Endothelial cell of umbilical vein (primary cell): ENCODE measurements at regions of chr19 and their contacts with region 1.

Region 1: GRCh38 chr19:35135389-35135909 is 590 bp upstream of the LGI4 start:
- DNase-seq: peak; percentile 67
- H3K4me3 ChIP-seq: no peak overlapping the region
- H3K27ac ChIP-seq: no peak overlapping the region
- H3K4me1 ChIP-seq: no peaks in the 10 kb centered on the region
- H3K27me3 ChIP-seq: no peaks in the 10 kb centered on the region
- CTCF ChIP-seq: peak; percentile 82 to 92
- POLR2A ChIP-seq: no peak

Region 2: GRCh38 chr19:35114353-35115176 is 20.9 kb before region 1 on chr19:
- CTCF ChIA-PET with region 1: interaction called, 20 read pairs
- POLR2A ChIA-PET with region 1: no interaction called
- dilution Hi-C with region 1: no loop called
- intact Hi-C with region 1: loop called (anchors 1 kb)
- DNase-seq: peak; percentile 60
- H3K4me3 ChIP-seq: no peak overlapping the region
- H3K27ac ChIP-seq: no peak overlapping the region
- H3K4me1 ChIP-seq: no peaks in the 10 kb centered on the region
- H3K27me3 ChIP-seq: no peaks in the 10 kb centered on the region
- CTCF ChIP-seq: peak; percentile 96 to 97
- POLR2A ChIP-seq: no peak

Region 3: DNA sequence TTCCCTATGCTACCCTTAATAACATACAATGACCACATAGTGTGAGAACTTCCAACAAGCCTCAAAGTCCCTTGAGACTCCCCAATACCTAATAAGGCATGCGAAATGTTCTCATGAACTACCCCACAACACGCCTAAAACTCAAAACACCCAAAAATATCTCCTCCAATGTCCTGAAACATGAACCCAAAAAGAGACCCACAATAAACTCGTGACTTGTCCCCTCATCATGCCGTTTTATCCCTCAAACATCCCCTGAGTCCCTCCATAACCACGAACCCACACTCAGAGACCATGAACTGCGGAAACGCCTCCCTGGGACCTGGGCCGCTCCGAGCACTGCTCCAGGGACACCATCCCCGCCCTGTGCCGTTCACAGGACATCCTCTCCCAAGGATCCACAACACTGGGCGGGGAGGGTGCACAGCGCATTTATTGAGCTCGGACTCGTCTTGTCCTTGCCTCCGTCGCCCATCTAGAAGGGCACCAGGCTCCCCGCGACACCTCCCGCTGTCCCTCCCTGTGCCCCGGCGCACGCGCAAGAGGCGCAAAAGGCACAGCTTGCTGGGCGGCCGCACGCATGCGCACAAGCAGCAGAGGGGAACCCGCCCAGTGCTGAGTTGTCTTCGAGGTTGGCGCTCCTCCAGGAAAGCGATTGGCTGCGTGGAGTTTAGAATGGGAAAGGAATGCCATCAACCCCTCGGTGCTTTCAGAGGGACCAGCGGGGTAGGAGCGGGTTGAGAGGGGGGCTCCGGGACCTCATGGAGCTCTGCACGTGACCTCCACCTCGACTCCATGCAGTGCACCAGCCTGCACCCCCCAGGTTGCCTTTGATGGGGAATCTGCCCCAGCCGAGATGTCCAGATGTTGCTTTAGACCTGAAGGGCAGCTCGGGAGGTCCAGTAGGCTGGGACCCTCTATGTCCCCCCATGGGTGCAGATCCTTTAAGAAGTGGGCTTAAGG is 11.1 kb before region 1 on chr19:
- CTCF ChIA-PET with region 1: interaction called, 23 read pairs
- POLR2A ChIA-PET with region 1: no interaction called
- dilution Hi-C with region 1: no loop called
- intact Hi-C with region 1: no loop called
- DNase-seq: peak; percentile 89
- H3K4me3 ChIP-seq: peak overlapping the region in 2 of 3 experiments; percentile 39 to 49
- H3K27ac ChIP-seq: no peak overlapping the region
- H3K4me1 ChIP-seq: peaks cover 3% of the 10 kb centered on the region
- H3K27me3 ChIP-seq: no peaks in the 10 kb centered on the region
- CTCF ChIP-seq: no peak
- POLR2A ChIP-seq: peak; percentile 63

Region 4: DNA sequence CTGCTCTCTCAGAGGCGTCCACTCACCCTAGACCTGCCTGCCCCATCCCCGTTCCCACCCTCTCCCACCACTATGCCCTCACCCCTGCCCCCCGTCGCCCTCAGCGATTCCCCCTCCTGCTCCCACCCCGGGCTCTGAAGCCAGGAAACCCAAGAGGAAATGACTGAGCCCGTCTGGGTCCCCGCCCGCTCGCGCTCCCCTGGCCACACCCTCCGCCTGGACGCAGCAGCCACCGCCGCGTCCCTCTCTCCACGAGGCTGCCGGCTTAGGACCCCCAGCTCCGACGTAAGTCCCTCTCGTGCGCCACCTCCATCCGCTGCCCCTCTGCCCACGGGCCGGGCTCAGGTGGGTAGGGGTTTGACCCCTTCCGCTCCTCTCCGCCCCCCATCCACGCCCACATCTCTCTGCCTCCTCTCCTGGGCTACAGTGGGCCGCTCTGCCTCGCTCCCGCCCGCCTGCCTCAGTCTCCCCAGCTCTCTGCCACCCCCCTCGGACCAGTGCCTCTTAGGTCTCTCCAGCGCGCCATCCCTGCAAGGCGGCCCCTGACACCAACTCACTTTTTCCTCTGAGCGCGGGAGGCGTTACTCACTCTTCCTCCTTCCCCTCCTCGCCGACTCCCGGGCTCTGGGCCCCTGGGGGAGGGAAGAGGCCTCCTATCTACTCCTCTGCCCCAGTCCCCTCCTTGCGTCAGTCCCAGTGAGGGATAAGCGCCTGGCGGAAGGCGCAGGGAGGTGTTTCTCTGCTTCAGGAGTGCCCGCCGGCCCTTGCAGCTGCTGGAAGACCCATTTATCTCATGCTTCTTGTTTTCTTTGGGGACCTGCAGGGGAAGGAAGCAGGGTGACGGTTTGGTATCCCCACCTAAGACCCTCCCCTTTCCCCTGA is 19.3 kb after region 1 on chr19 and contains the start of gene FXYD5:
- CTCF ChIA-PET with region 1: interaction called, 14 read pairs
- POLR2A ChIA-PET with region 1: interaction called, 4 read pairs
- dilution Hi-C with region 1: no loop called
- intact Hi-C with region 1: no loop called
- DNase-seq: peak; percentile 79
- H3K4me3 ChIP-seq: peak within 1 kb of the TSS; percentile 78 to 98 (median 82)
- H3K27ac ChIP-seq: peak within 1 kb of the TSS; percentile 95
- H3K4me1 ChIP-seq: peaks cover 20% of the 10 kb centered on the region
- H3K27me3 ChIP-seq: no peaks in the 10 kb centered on the region
- CTCF ChIP-seq: no peak
- POLR2A ChIP-seq: peak; percentile 77
- total RNA-seq, gene FXYD5: 219 and 223 TPM in 2 replicates

Region 5: DNA sequence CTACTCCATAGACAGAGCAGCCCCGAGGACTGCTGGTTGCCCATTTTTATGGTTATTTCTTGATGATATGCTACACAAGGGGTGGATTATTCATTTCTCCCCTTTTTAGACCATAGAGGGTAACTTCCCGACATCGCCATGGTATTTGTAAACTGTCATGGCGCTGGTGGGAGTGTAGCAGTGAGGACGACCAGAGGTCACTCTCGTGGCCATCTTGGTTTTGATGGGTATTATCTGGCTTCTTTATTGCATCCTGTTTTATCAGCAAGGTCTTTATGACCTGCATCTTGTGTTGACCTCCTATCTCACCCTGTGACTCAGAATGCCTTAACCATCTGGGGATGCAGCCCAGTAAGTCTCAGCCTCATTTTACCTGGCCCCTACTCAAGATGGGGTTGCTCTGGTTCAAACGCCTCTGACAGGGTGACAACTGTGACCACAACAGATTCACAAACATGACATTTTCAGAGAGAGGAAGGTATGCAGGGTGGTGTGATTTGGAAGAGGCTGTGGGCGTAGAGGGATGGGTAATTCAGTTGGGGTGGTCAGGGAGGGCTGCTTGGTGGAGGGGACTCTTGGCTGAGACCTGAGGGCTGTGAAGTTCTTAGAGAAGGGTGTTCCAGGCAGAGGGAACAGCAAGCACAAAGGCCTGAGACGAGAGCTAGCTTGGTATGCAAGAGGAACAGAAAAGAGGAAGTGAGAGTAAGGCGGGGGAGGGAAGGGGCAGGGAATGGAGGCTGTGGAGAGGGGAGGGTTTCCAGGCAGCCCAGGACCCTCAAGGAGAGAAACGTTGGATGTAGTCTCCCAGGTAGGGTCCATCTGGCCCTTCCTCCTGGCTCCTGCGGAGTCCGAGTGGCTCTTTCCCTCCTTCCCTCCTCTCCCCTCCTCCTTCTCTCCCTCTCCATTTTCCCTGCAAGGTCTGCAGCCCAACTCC is 69.6 kb after region 1 on chr19:
- CTCF ChIA-PET with region 1: no interaction called
- POLR2A ChIA-PET with region 1: no interaction called
- dilution Hi-C with region 1: no loop called
- intact Hi-C with region 1: no loop called
- DNase-seq: no peak
- H3K4me3 ChIP-seq: no peak overlapping the region
- H3K27ac ChIP-seq: no peak overlapping the region
- H3K4me1 ChIP-seq: no peaks in the 10 kb centered on the region
- H3K27me3 ChIP-seq: peaks cover 0 to 2% of the 10 kb centered on the region in 2 experiments
- CTCF ChIP-seq: no peak
- POLR2A ChIP-seq: no peak